Dorsolateral prefrontal cortex (tissue), 120 donors: ENCODE measurements at regions of chr5 and their contacts with region 1.

Region 1: DNA sequence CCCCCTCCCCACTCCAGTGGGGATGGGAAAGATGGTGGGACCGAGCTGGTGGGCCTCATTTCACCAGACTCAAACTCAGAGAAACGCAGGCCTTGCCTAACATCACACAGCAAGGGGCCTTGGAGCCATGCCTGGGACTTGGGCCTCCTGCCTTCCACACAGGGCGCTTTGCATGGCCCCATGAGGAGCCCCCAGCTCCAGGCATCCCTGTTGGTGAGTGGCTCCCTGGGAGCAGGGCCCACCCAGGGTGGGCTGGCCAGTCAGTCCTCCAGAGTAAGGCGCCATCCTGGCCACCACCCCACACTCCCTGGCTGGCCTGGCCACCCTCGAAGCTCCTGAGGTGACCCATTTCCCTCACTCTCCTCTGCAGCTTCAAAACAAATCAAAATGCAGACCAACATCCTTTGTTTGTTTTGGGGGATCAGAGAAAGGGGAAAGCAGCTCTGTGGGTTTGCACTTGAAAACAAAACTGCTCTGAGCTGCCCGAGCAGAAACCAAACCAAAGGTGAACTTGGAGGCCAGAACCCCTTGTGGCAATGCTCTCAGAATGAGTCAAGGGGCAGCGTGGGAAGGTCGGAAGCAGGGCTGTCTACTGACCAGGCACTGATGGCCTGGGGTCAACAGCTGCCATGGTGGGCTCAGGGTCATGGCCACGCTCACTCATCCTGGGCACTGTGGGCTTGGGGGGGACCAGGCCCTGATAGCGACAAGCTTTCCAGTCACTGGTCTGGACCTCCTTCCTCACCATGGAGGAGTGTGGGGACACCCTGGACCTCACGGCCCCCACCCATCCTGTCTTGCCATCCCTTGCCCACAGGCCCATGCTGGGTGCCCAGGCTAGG is 37.0 kb upstream of the VDAC1 start:
- DNase-seq: no peak
- H3K4me3 ChIP-seq: no peak overlapping the region
- H3K27ac ChIP-seq: no peak overlapping the region
- H3K27me3 ChIP-seq: no peaks in the 10 kb centered on the region
- CTCF ChIP-seq: no peak

Region 2: DNA sequence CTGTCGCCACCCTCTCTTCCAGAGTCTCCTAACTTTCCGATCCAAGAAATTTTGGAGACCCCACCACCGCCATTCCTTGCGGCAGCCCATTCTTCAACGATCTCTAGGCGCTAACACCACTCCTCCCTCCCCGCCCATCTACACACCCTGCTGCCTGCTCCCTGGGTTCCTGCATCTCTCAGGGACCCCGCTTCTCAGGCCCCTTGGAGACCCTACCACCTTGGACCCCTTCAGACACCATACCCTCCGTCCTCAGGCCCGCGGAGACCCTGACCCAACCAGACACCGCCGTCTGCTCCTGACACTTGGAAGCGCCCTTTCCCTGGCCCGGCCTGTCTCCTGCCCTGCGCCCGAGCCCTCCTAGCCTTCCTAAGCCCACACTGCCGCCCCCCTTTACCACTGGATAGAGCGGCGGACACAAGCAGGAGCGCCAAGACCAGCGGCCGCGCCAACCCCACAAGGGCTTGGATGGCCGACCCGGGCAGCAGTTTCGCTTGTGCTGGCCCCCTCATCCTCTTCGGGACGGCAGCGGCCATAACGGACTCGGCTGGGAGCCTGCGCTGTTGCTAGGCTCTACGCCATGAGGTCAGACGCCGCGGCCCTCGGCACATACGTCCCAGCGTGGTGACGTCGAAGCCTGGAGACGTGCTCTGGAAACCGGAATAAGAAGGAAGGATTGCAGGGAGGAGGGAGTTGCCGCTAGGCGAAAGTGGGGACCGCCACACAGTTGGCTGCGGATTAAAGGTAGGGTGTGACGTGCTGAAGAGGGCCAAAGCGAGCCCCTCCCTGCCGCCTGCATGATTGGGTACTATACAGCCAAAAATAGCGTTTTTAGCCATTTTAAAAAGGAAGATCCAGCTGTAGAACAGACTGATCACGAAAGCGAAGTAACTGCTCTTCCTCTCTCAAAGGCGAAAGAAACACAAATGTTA is 73.5 kb before region 1 on chr5 and contains the start of gene C5orf15:
- intact Hi-C with region 1: no loop called
- DNase-seq: peak; percentile 91 to 98 (median 97)
- H3K4me3 ChIP-seq: peak within 1 kb of the TSS; percentile 51 to 97 (median 90)
- H3K27ac ChIP-seq: peak within 1 kb of the TSS; percentile 67 to 97 (median 92)
- H3K27me3 ChIP-seq: no peaks in the 10 kb centered on the region
- CTCF ChIP-seq: peak in 49 of 56 donors; percentile 18 to 57 (median 44)
- total RNA-seq, gene C5orf15: 9.9 to 30.7 (median 18.7) TPM

Region 3: DNA sequence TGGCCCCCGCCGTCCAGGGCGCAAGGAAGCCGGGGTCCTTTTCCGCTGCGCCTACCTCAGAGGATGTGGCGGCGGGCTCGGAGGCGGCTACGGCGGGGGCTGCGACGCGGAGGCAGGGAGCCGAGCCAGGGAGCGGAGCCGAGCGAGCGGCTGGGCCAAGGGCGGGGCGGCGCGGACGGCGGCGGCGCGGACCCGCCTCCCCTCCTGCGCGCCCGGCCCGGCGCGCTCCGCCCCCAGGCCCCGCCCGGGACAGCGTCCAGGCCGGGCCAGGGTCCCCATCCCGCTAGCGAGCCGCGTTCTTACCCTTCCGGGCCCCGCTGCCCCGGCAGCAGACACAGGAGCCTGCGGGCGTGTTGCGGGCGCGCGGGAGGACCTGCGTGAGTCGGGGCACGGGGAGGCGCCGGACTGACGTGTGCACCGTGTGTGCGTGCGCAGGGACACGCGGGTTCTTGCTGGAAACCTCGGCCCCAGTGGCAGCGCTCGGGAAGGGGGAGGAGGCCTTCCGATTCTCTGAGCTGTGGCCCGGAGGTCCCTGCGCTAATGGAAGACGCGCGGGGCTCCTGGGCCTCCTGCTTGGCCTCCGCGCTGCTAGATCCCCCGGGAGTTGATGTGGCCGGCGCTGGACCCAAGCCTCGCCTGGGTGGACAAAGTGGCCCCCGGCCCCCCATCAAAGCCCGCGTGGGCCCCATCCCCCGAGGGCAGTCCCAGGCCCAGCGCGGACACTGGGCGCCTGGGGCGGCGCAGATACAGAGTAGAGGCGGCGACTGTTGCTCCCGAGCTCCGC is 37.0 kb before region 1 on chr5 and contains the start of gene VDAC1:
- intact Hi-C with region 1: loop called in 1 of 2 experiments (anchors 5 kb)
- DNase-seq: peak; percentile 58 to 88 (median 84)
- H3K4me3 ChIP-seq: peak within 1 kb of the TSS; percentile 63 to 97 (median 86)
- H3K27ac ChIP-seq: peak within 1 kb of the TSS; percentile 88 to 100 (median 98)
- H3K27me3 ChIP-seq: no peaks in the 10 kb centered on the region
- CTCF ChIP-seq: peak in 12 of 56 donors; percentile 7 to 31 (median 19)
- total RNA-seq, gene VDAC1: 104 to 278 (median 216) TPM

Region 4: DNA sequence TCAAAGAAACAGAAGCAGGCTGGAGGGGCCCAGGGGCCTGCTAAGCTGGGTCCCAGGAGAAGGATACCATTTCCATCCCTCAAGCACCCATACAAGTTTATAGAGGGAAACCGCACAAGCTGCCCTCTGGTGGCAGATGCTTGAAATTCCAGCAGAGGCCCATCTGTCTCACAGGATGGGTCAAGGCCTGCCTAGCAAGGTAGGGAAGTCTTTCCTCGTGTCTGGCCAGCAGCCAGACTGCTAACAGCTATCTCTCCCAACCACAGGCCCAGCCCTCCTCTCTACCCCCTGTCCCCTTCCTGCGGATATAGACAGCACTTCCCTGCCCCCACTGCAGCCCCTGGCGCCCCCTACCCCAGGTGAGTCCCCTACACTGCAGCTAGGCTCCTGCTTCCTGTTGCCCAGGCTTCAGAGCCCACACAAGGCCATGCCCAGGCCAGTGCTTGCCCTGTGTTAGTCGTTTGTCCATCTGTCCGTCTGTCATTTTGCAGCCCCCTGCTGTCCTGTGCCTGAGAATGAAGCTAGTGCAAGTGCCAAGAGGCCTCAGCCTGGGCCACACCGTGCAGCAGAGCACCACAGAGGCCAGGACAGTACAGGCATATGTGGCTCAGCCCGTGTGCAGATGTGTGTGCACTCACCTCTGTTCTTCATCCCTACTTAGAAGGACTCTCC is 98.9 kb after region 1 on chr5:
- intact Hi-C with region 1: loop called (anchors 1 to 5 kb)
- DNase-seq: peak; percentile 60 to 81 (median 72)
- H3K4me3 ChIP-seq: no peak overlapping the region
- H3K27ac ChIP-seq: peak overlapping the region in 4 of 59 donors; percentile 6 to 52 (median 13)
- H3K27me3 ChIP-seq: no peaks in the 10 kb centered on the region
- CTCF ChIP-seq: peak; percentile 49 to 91 (median 78)

Region 5: DNA sequence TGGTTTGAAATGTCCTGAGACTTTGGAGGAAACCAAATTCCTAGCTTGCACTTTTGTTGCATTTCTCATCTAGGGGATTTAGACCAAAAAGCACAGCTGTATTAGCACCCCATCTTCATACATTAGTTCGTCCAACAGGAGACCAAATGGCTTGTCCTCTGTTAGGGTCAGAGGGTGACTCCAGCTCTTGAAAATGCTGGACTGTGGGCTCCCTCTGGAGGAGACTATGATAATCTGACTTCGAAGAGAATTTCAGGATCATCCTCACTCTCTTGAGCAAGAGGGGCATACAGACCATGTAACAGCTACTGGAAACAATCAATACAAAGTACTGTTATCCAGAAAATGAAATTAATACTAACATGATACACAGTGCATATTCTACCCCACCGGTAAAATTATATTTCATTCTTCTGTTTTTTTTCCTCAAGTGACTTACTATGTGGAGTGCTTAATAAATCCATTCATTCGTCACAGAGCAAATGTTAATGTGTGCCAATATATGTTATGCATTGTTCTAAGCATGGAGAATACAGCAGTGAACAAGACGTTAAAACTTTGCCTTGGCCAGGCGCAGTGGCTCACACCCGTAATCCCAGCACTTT is 247.8 kb after region 1 on chr5:
- intact Hi-C with region 1: loop called in 1 of 2 experiments (anchors 10 kb)
- DNase-seq: peak in 5 of 10 donors; percentile 16 to 55 (median 44)
- H3K4me3 ChIP-seq: no peak overlapping the region
- H3K27ac ChIP-seq: no peak overlapping the region
- H3K27me3 ChIP-seq: no peaks in the 10 kb centered on the region
- CTCF ChIP-seq: peak; percentile 53 to 94 (median 78)